CD8-positive, alpha-beta memory T cell (primary cell): ENCODE measurements at regions of chr20 and their contacts with region 1.

Region 1: DNA sequence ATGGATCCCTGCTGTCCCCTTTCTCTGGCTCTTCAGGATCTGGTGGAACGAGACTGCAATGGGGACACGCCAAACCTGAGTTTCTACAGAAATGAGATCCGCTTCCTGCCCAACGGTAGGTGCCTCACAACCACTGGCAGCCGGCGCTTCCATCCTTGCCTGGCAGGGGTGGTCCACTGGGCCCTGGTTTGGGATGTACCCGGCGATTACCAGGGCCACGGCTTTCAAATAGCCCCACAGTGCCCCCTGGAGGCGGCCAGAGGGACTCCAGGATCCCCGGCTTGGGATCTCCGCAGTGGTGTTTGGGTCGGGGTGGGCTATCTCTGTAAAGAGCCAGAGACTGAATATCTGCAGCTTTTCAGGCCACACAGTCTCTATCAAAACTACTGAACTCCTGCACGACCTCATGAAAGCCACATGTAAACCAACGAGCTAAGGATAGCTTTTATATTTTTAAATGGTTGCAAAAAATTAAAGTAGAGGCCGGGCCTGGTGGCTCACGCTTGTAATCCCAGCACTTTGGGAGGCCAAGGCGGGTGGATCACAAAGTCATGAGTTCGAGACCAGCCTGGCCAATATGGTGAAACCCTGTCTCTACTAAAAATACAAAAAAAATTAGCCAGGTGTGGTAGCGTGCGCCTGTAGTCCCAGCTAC is 3.7 kb downstream of the OGFR start:
- DNase-seq: peak; percentile 63 to 77 (median 73)
- H3K4me3 ChIP-seq: no peak overlapping the region
- H3K4me3 Mint-ChIP-seq: peak overlapping the region in 6 of 7 donors; percentile 45 to 86 (median 74)
- H3K27ac ChIP-seq: no peak overlapping the region
- H3K27ac Mint-ChIP-seq: peak overlapping the region in 7 of 8 donors; percentile 33 to 84 (median 55)
- H3K4me1 ChIP-seq: peaks cover 39% of the 10 kb centered on the region
- H3K4me1 Mint-ChIP-seq: peaks cover 22 to 38% (median 28%) of the 10 kb centered on the region in 3 donors
- H3K27me3 ChIP-seq: no peaks in the 10 kb centered on the region
- H3K27me3 Mint-ChIP-seq: peaks cover 0 to 3% of the 10 kb centered on the region in 2 donors

Region 2: GRCh38 chr20:62500237-62500864 is 308.0 kb before region 1 on chr20:
- CTCF ChIA-PET with region 1: interaction called, 14 read pairs
- POLR2A ChIA-PET with region 1: no interaction called
- DNase-seq: peak; percentile 58 to 81 (median 69)
- H3K4me3 ChIP-seq: no peak overlapping the region
- H3K4me3 Mint-ChIP-seq: peak overlapping the region in 1 of 7 donors; percentile 28
- H3K27ac ChIP-seq: no peak overlapping the region
- H3K27ac Mint-ChIP-seq: peak overlapping the region in 5 of 8 donors; percentile 1 to 79 (median 63)
- H3K4me1 ChIP-seq: no peaks in the 10 kb centered on the region
- H3K4me1 Mint-ChIP-seq: peaks cover 13 to 23% (median 20%) of the 10 kb centered on the region in 3 donors
- H3K27me3 ChIP-seq: no peaks in the 10 kb centered on the region
- H3K27me3 Mint-ChIP-seq: peaks cover 3% of the 10 kb centered on the region in 2 donors

Region 3: DNA sequence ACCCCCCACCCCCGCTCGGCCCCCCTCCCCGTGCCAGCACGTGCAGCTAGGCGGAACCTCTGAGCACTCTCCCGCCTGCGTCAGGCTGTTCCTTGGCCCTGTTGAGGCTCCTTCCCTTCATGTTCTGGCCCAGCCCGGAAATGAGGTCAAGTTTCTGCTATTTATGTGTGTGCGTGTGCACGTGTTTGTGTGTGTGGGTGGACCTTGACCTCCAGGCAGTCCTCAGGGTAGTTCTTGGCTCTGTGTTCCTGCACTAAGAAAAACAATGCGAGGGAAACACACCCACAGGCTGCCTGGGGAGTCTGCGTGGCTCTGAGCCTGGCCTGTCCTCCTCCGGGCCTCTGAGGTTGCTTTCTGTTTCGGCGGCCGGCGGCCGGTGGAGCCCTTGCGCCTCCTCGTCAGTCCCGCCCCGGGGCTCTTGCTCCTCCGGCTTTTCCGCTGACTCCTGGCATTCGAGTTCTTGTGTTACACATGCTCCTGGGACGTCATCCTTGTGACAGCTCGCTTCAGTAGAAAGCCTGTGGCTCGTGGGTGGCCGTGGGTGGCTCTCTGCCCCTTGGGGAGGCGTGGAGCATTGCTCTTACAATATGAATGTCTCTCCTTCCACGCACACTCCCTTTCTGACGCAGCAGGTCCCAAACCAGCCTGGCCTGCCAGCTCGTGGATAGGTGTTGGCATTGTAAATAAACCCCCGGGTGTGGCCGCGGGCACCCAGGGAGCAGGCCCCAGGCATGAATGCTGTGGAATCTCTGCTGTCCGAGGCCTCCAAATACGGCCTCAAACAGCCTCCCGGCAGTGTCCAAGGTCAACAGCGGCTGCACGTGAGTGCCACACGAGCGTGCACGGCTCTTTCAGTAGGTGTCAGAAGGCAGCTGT is 156.0 kb before region 1 on chr20:
- CTCF ChIA-PET with region 1: interaction called, 13 read pairs
- POLR2A ChIA-PET with region 1: interaction called, 3 read pairs
- DNase-seq: peak; percentile 34 to 83 (median 73)
- H3K4me3 ChIP-seq: peak overlapping the region; percentile 47
- H3K4me3 Mint-ChIP-seq: peak overlapping the region; percentile 72 to 90 (median 82)
- H3K27ac ChIP-seq: peak overlapping the region; percentile 82
- H3K27ac Mint-ChIP-seq: peak overlapping the region; percentile 90 to 99 (median 96)
- H3K4me1 ChIP-seq: peaks cover 29% of the 10 kb centered on the region
- H3K4me1 Mint-ChIP-seq: peaks cover 20 to 32% (median 30%) of the 10 kb centered on the region in 3 donors
- H3K27me3 ChIP-seq: no peaks in the 10 kb centered on the region
- H3K27me3 Mint-ChIP-seq: peaks cover 0 to 2% of the 10 kb centered on the region in 2 donors

Region 4: GRCh38 chr20:62668441-62669027 is 139.8 kb before region 1 on chr20:
- CTCF ChIA-PET with region 1: interaction called, 11 read pairs
- POLR2A ChIA-PET with region 1: no interaction called
- DNase-seq: peak in 4 of 5 donors; percentile 24 to 51 (median 37)
- H3K4me3 ChIP-seq: no peak overlapping the region
- H3K4me3 Mint-ChIP-seq: no peak overlapping the region
- H3K27ac ChIP-seq: no peak overlapping the region
- H3K27ac Mint-ChIP-seq: peak overlapping the region in 1 of 8 donors; percentile 32
- H3K4me1 ChIP-seq: no peaks in the 10 kb centered on the region
- H3K4me1 Mint-ChIP-seq: no peaks in the 10 kb centered on the region
- H3K27me3 ChIP-seq: no peaks in the 10 kb centered on the region
- H3K27me3 Mint-ChIP-seq: no peaks in the 10 kb centered on the region

Region 5: GRCh38 chr20:62787321-62787720 is 21.0 kb before region 1 on chr20:
- CTCF ChIA-PET with region 1: interaction called, 20 read pairs
- POLR2A ChIA-PET with region 1: no interaction called
- DNase-seq: no peak
- H3K4me3 ChIP-seq: no peak overlapping the region
- H3K4me3 Mint-ChIP-seq: no peak overlapping the region
- H3K27ac ChIP-seq: no peak overlapping the region
- H3K27ac Mint-ChIP-seq: peak overlapping the region in 1 of 8 donors; percentile 24
- H3K4me1 ChIP-seq: peaks cover 3% of the 10 kb centered on the region
- H3K4me1 Mint-ChIP-seq: peaks cover 6 to 11% (median 6%) of the 10 kb centered on the region in 3 donors
- H3K27me3 ChIP-seq: no peaks in the 10 kb centered on the region
- H3K27me3 Mint-ChIP-seq: no peaks in the 10 kb centered on the region

Region 6: GRCh38 chr20:62793912-62794724 is 14.2 kb before region 1 on chr20:
- CTCF ChIA-PET with region 1: interaction called, 31 read pairs
- POLR2A ChIA-PET with region 1: interaction called, 46 read pairs
- DNase-seq: peak; percentile 90 to 96 (median 95)
- H3K4me3 ChIP-seq: peak overlapping the region; percentile 89
- H3K4me3 Mint-ChIP-seq: peak overlapping the region; percentile 78 to 96 (median 86)
- H3K27ac ChIP-seq: peak overlapping the region; percentile 94
- H3K27ac Mint-ChIP-seq: peak overlapping the region; percentile 93 to 99 (median 96)
- H3K4me1 ChIP-seq: peaks cover 22% of the 10 kb centered on the region
- H3K4me1 Mint-ChIP-seq: peaks cover 25 to 57% (median 33%) of the 10 kb centered on the region in 3 donors
- H3K27me3 ChIP-seq: no peaks in the 10 kb centered on the region
- H3K27me3 Mint-ChIP-seq: no peaks in the 10 kb centered on the region

Region 7: DNA sequence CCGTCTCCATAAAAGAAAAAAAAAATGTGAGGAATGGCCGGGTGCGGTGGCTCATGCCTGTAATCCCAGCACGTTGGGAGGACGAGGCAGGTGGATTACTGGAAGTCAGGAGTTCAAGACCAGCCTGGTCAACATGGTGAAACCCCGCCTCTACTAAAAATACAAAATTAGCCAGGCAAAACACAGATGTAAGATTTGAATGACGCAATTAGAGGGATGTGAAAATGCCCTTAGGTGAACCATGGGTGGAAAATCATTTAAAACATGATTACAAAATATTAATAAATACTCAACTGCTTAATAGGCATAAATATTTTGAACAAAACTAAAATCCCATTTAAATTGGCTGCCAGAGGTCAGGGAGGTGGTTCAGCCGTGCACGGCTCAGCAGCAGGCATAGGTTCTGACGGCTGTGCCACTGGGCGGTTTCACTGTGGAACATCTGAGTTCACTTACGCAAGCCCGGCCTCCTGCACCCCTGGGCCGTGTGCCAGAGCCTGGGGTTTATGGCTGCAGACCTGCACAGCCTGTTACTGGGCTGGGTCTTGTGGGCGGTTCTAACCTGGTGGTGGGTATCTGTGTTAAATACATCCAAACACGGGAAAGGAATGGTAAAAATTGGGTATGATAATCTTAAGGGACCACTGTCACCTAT is 29.6 kb after region 1 on chr20:
- CTCF ChIA-PET with region 1: no interaction called
- POLR2A ChIA-PET with region 1: interaction called, 12 read pairs
- DNase-seq: no peak
- H3K4me3 ChIP-seq: no peak overlapping the region
- H3K4me3 Mint-ChIP-seq: no peak overlapping the region
- H3K27ac ChIP-seq: no peak overlapping the region
- H3K27ac Mint-ChIP-seq: no peak overlapping the region
- H3K4me1 ChIP-seq: no peaks in the 10 kb centered on the region
- H3K4me1 Mint-ChIP-seq: peaks cover 0 to 1% (median 0%) of the 10 kb centered on the region in 3 donors
- H3K27me3 ChIP-seq: no peaks in the 10 kb centered on the region
- H3K27me3 Mint-ChIP-seq: peaks cover 1 to 5% of the 10 kb centered on the region in 2 donors